SK-N-SH (cell line): ENCODE measurements at regions of chr14 and their contacts with region 1.

Region 1: GRCh38 chr14:74257078-74257989 is 18.1 kb downstream of the VSX2 start:
- DNase-seq: peak; percentile 95
- H3K4me3 ChIP-seq: peak overlapping the region; percentile 45 to 81
- H3K27ac ChIP-seq: no peak overlapping the region
- H3K4me1 ChIP-seq: peaks cover 0 to 16% of the 10 kb centered on the region in 2 experiments; a peak in 1 of 4 replicates
- H3K27me3 ChIP-seq: peaks cover 47% of the 10 kb centered on the region
- CTCF ChIP-seq: peak; percentile 83
- EP300 ChIP-seq: peak in 1 of 2 experiments; percentile 74; a peak in 2 of 4 replicates
- RAD21 ChIP-seq: peak; percentile 40

Region 2: DNA sequence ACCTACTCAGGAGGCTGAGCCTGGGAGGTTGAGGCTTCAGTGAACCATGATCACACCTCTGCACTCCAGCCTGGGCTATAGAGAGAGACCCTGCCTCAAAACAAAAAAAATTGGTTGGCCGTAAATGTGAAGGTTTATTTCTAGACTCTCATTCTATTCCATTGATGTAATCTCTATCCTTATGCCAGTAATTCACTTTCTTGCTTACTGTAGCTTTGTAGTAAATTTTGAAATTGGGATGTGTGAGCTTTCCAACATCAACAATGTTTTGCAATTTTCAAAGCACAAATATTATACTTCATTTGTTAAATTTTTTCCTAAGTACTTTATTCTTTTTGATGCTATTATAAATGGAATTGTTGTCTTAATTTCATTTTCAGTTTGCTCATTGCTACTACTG is 148.0 kb before region 1 on chr14:
- CTCF ChIA-PET with region 1: interaction called, 36 read pairs
- POLR2A ChIA-PET with region 1: no interaction called
- DNase-seq: no peak
- H3K4me3 ChIP-seq: no peak overlapping the region
- H3K27ac ChIP-seq: no peak overlapping the region
- H3K4me1 ChIP-seq: no peaks in the 10 kb centered on the region
- H3K27me3 ChIP-seq: no peaks in the 10 kb centered on the region
- CTCF ChIP-seq: no peak
- EP300 ChIP-seq: no peak
- RAD21 ChIP-seq: no peak

Region 3: GRCh38 chr14:74147571-74147970 is 109.8 kb before region 1 on chr14:
- CTCF ChIA-PET with region 1: interaction called, 21 read pairs
- POLR2A ChIA-PET with region 1: no interaction called
- DNase-seq: no peak
- H3K4me3 ChIP-seq: no peak overlapping the region
- H3K27ac ChIP-seq: no peak overlapping the region
- H3K4me1 ChIP-seq: no peaks in the 10 kb centered on the region
- H3K27me3 ChIP-seq: no peaks in the 10 kb centered on the region
- CTCF ChIP-seq: no peak
- EP300 ChIP-seq: no peak
- RAD21 ChIP-seq: no peak

Region 4: GRCh38 chr14:74223016-74223415 is 34.3 kb before region 1 on chr14:
- CTCF ChIA-PET with region 1: interaction called, 64 read pairs
- POLR2A ChIA-PET with region 1: no interaction called
- DNase-seq: no peak
- H3K4me3 ChIP-seq: no peak overlapping the region
- H3K27ac ChIP-seq: no peak overlapping the region
- H3K4me1 ChIP-seq: no peaks in the 10 kb centered on the region; a peak in 1 of 4 replicates
- H3K27me3 ChIP-seq: peaks cover 52% of the 10 kb centered on the region
- CTCF ChIP-seq: no peak
- EP300 ChIP-seq: no peak
- RAD21 ChIP-seq: no peak

Region 5: DNA sequence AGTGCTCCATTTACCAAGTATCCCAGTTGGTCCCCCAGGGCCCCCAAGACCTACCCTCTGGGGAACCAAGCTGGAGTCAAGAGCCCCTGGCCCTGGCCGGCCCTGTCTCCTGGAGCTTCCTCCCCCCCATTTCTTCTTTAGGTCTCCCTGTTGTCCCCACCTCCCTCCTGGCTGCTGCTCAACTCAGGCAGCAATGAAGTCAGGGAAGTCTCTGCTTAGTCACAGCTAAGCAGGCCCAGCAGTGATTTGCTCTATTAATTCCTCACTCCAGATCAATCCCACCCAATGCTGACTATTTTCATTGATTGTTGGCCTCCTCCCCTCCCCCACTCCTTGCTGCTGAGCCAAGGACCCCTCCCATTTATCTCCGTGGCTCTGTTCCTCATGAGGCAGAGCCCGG is 10.3 kb after region 1 on chr14:
- CTCF ChIA-PET with region 1: interaction called, 35 read pairs
- POLR2A ChIA-PET with region 1: no interaction called
- DNase-seq: no peak
- H3K4me3 ChIP-seq: no peak overlapping the region
- H3K27ac ChIP-seq: no peak overlapping the region
- H3K4me1 ChIP-seq: no peaks in the 10 kb centered on the region; a peak in 1 of 4 replicates
- H3K27me3 ChIP-seq: no peaks in the 10 kb centered on the region
- CTCF ChIP-seq: no peak
- EP300 ChIP-seq: no peak
- RAD21 ChIP-seq: no peak

Region 6: GRCh38 chr14:74296037-74296467 is 38.7 kb after region 1 on chr14:
- CTCF ChIA-PET with region 1: interaction called, 12 read pairs
- POLR2A ChIA-PET with region 1: no interaction called
- DNase-seq: no peak
- H3K4me3 ChIP-seq: no peak overlapping the region
- H3K27ac ChIP-seq: no peak overlapping the region
- H3K4me1 ChIP-seq: peaks cover 0 to 2% of the 10 kb centered on the region in 2 experiments; a peak in 1 of 4 replicates
- H3K27me3 ChIP-seq: no peaks in the 10 kb centered on the region
- CTCF ChIP-seq: no peak
- EP300 ChIP-seq: no peak
- RAD21 ChIP-seq: no peak